GM12878 (cell line): ENCODE measurements at regions of chr12 and their contacts with region 1.

Region 1: GRCh38 chr12:12786716-12787601 is 1.5 kb downstream of the APOLD1 start:
- DNase-seq: no peak
- ATAC-seq: peak; percentile 96
- H3K4me3 ChIP-seq: peak overlapping the region; percentile 65
- H3K27ac ChIP-seq: peak overlapping the region; percentile 27; the same call in 1 of the 2 replicates
- H3K4me1 ChIP-seq: peaks cover 18% of the 10 kb centered on the region
- H3K27me3 ChIP-seq: no peaks in the 10 kb centered on the region
- CTCF ChIP-seq: no peak
- EP300 ChIP-seq: no peak
- POLR2A ChIP-seq: peak; percentile 96
- RAD21 ChIP-seq: no peak

Region 2: GRCh38 chr12:12797794-12798152 is 10.8 kb after region 1 on chr12:
- CTCF ChIA-PET with region 1: interaction called, 67 read pairs
- POLR2A ChIA-PET with region 1: interaction called, 5 read pairs
- RAD21 ChIA-PET with region 1: interaction called, 12 read pairs
- SMC1A ChIA-PET with region 1: interaction called, 50 read pairs
- in situ Hi-C with region 1: no loop called
- intact Hi-C with region 1: no loop called
- DNase-seq: no peak
- ATAC-seq: no peak
- H3K4me3 ChIP-seq: no peak overlapping the region
- H3K27ac ChIP-seq: no peak overlapping the region
- H3K4me1 ChIP-seq: peaks cover under 1% of the 10 kb centered on the region; the same call in 1 of the 2 replicates
- H3K27me3 ChIP-seq: no peaks in the 10 kb centered on the region
- CTCF ChIP-seq: no peak
- EP300 ChIP-seq: no peak
- POLR2A ChIP-seq: no peak
- RAD21 ChIP-seq: no peak

Region 3: GRCh38 chr12:12813120-12814101 is 26.5 kb after region 1 on chr12 and contains the start of gene DDX47:
- CTCF ChIA-PET with region 1: interaction called, 136 read pairs
- POLR2A ChIA-PET with region 1: interaction called, 4 read pairs
- RAD21 ChIA-PET with region 1: interaction called, 28 read pairs
- SMC1A ChIA-PET with region 1: interaction called, 88 read pairs
- in situ Hi-C with region 1: no loop called
- intact Hi-C with region 1: loop called (anchors 1 kb)
- DNase-seq: peak; percentile 76
- ATAC-seq: peak; percentile 76
- H3K4me3 ChIP-seq: peak within 1 kb of the TSS; percentile 86
- H3K27ac ChIP-seq: peak within 1 kb of the TSS; percentile 86
- H3K4me1 ChIP-seq: peaks cover 16% of the 10 kb centered on the region
- H3K27me3 ChIP-seq: no peaks in the 10 kb centered on the region
- CTCF ChIP-seq: peak; percentile 96 to 98 (median 98)
- EP300 ChIP-seq: no peak
- POLR2A ChIP-seq: peak; percentile 76
- RAD21 ChIP-seq: peak; percentile 48; the same call in 1 of the 2 replicates
- polyA plus RNA-seq, gene DDX47: 244 to 266 TPM

Region 4: GRCh38 chr12:12837025-12837872 is 50.3 kb after region 1 on chr12:
- CTCF ChIA-PET with region 1: interaction called, 38 read pairs
- POLR2A ChIA-PET with region 1: no interaction called
- RAD21 ChIA-PET with region 1: interaction called, 7 read pairs
- SMC1A ChIA-PET with region 1: interaction called, 13 read pairs
- in situ Hi-C with region 1: no loop called
- intact Hi-C with region 1: loop called (anchors 2 kb)
- DNase-seq: no peak
- ATAC-seq: peak; percentile 77
- H3K4me3 ChIP-seq: no peak overlapping the region
- H3K27ac ChIP-seq: no peak overlapping the region
- H3K4me1 ChIP-seq: no peaks in the 10 kb centered on the region; the same call in 1 of the 2 replicates
- H3K27me3 ChIP-seq: no peaks in the 10 kb centered on the region
- CTCF ChIP-seq: peak; percentile 37 to 52 (median 43); a peak in 5 of 6 replicates
- EP300 ChIP-seq: no peak
- POLR2A ChIP-seq: no peak
- RAD21 ChIP-seq: peak; percentile 35; the same call in 1 of the 2 replicates

Region 5: GRCh38 chr12:12983420-12984035 is 196.6 kb after region 1 on chr12:
- CTCF ChIA-PET with region 1: interaction called, 11 read pairs
- POLR2A ChIA-PET with region 1: interaction called, 3 read pairs
- RAD21 ChIA-PET with region 1: no interaction called
- SMC1A ChIA-PET with region 1: no interaction called
- in situ Hi-C with region 1: no loop called
- intact Hi-C with region 1: loop called (anchors 1 kb)
- DNase-seq: no peak
- ATAC-seq: peak; percentile 71
- H3K4me3 ChIP-seq: no peak overlapping the region
- H3K27ac ChIP-seq: no peak overlapping the region
- H3K4me1 ChIP-seq: no peaks in the 10 kb centered on the region
- H3K27me3 ChIP-seq: peaks cover 0 to 3% of the 10 kb centered on the region in 2 experiments; a peak in 2 of 4 replicates
- CTCF ChIP-seq: peak; percentile 38 to 41 (median 41); a peak in 5 of 6 replicates
- EP300 ChIP-seq: no peak
- POLR2A ChIP-seq: no peak
- RAD21 ChIP-seq: peak; percentile 57